PC-3 (cell line): ENCODE measurements at regions of chr2 and their contacts with region 1.

Region 1: GRCh38 chr2:111946294-111947114 is 48.1 kb downstream of the MERTK start:
- DNase-seq: peak; percentile 99
- ATAC-seq: peak; percentile 96
- H3K4me3 ChIP-seq: peak overlapping the region; percentile 15; the same call in 1 of the 2 replicates
- H3K27ac ChIP-seq: peak overlapping the region; percentile 74
- H3K4me1 ChIP-seq: peaks cover 22% of the 10 kb centered on the region
- H3K27me3 ChIP-seq: no peaks in the 10 kb centered on the region
- CTCF ChIP-seq: no peak

Region 2: DNA sequence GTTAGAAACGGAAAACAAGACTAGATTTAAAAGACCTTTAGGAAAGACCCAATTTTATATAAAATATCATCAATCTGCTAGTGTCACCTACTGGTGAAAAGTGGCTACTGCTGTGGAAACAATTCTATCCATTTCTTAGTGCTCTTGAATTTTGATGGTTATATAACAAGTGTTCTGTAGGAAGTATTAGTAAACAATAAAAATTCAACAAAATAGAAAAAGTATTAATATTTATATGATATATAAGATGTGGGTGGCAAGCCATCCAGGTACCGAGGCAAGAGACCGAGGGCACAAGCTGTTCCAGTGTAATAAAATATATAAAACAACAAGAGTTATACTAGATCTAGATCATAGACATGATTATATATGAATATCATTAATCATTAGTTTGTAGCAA is 102.4 kb after region 1 on chr2:
- CTCF ChIA-PET with region 1: no interaction called
- POLR2A ChIA-PET with region 1: no interaction called
- intact Hi-C with region 1: loop called (anchors 1 kb)
- DNase-seq: peak; percentile 86
- ATAC-seq: peak; percentile 64
- H3K4me3 ChIP-seq: no peak overlapping the region
- H3K27ac ChIP-seq: no peak overlapping the region
- H3K4me1 ChIP-seq: peaks cover 6% of the 10 kb centered on the region
- H3K27me3 ChIP-seq: no peaks in the 10 kb centered on the region
- CTCF ChIP-seq: peak; percentile 72

Region 3: DNA sequence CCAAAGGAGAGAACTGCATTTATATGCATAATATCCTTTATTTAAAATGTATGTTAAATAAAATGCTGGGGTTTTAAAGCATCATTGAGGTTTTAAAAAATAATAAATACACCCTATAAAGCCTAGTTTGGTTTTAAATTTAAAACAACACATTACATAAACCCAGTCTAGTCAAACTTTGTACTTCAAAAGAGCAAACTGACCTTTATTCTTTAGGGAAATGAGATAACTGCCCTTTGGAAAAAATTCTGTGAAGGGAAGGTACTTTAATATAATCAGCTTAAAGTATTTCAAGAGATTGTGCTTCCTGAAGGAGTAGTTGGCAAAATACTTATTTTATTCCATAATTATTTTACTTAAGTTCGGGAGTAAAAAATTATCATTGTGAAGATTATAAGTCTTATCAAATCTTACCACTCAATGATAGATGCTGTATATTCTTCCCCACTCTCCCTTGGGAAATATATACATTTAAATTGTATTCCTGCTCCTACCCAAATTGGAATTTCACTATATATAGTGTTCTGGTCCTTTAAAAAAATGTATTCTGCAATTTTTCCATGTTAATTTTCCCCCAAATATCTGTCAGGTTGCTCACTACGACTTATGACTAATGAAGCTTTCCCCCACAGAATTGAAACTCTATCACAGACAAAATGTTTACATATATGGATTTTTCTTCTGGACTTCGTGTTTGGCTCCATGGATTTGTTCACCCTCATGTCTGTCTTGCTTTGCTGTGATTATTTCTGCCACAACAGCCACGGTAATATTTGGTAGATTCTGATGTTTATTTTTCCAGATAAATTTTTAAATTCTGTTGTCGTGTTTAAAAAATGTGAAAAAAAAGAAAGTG is 371.0 kb after region 1 on chr2:
- CTCF ChIA-PET with region 1: no interaction called
- POLR2A ChIA-PET with region 1: no interaction called
- intact Hi-C with region 1: no loop called
- DNase-seq: no peak
- ATAC-seq: no peak
- H3K4me3 ChIP-seq: no peak overlapping the region
- H3K27ac ChIP-seq: no peak overlapping the region
- H3K4me1 ChIP-seq: peaks cover 10% of the 10 kb centered on the region; the same call in 1 of the 2 replicates
- H3K27me3 ChIP-seq: no peaks in the 10 kb centered on the region
- CTCF ChIP-seq: no peak